ENCODE measurements at regions of chr15 and their contacts with region 1.

Region 1: GRCh38 chr15:92097474-92098178 is 244.1 kb downstream of the SLCO3A1 start:
- DNase-seq: peak; percentile 62
- H3K4me3 Mint-ChIP-seq: no peak overlapping the region
- H3K27ac Mint-ChIP-seq: peak overlapping the region; percentile 78
- H3K4me1 Mint-ChIP-seq: peaks cover 61% of the 10 kb centered on the region
- H3K27me3 Mint-ChIP-seq: no peaks in the 10 kb centered on the region

Region 2: GRCh38 chr15:92053840-92054239 is 43.8 kb before region 1 on chr15:
- CTCF ChIA-PET with region 1: no interaction called
- DNase-seq: no peak
- H3K4me3 Mint-ChIP-seq: no peak overlapping the region
- H3K27ac Mint-ChIP-seq: no peak overlapping the region
- H3K4me1 Mint-ChIP-seq: no peaks in the 10 kb centered on the region
- H3K27me3 Mint-ChIP-seq: no peaks in the 10 kb centered on the region

Region 3: DNA sequence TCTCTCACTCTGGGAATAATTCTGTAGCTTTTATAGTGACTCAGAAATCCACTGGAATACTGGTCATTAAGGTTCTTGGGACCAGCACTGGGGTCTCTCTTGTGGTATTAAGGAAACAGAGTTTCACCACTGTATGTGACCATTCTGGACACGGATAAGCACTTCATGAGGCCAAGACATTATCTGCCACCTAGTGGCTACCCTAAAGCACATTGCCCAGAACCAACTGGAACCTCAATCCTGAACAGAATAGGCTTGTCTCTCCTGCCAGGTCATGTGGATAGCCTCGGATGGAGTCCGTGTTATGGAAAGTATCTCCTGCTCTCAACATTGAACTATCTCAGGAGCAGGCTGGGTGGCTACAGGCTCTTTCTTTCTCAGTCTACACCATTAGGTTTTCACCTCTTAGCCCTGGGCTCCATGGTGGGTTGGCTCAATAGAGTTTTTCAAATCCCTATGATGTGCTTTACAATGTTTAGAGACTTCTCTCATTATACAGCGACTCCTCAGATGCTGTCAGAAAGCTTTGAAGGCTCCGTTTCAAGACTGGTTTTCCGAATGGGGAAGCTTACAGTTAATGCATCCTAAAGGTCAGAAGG is 128.5 kb after region 1 on chr15:
- CTCF ChIA-PET with region 1: interaction called, 26 read pairs
- DNase-seq: no peak
- H3K4me3 Mint-ChIP-seq: no peak overlapping the region
- H3K27ac Mint-ChIP-seq: no peak overlapping the region
- H3K4me1 Mint-ChIP-seq: no peaks in the 10 kb centered on the region
- H3K27me3 Mint-ChIP-seq: peaks cover 4% of the 10 kb centered on the region

Measured in activated naive CD4-positive, alpha-beta T cell treated with anti-CD3 and anti-CD28 coated beads, Interleukin-2, amount 10 ng/mL, durations not matched to agents 7 days and 5 days (primary cell).